Spleen (tissue), 13 donors: ENCODE measurements at regions of chr17 and their contacts with region 1.

Region 1: GRCh38 chr17:17108451-17109049 is 66.3 kb downstream of the MPRIP start:
- DNase-seq: no peak
- H3K4me3 ChIP-seq: no peak overlapping the region
- H3K27ac ChIP-seq: peak overlapping the region in 6 of 8 donors; percentile 20 to 72 (median 38)
- H3K4me1 ChIP-seq: peaks cover 36 to 100% (median 74%) of the 10 kb centered on the region in 6 donors
- H3K27me3 ChIP-seq: no peaks in the 10 kb centered on the region
- CTCF ChIP-seq: no peak
- POLR2A ChIP-seq: no peak

Region 2: DNA sequence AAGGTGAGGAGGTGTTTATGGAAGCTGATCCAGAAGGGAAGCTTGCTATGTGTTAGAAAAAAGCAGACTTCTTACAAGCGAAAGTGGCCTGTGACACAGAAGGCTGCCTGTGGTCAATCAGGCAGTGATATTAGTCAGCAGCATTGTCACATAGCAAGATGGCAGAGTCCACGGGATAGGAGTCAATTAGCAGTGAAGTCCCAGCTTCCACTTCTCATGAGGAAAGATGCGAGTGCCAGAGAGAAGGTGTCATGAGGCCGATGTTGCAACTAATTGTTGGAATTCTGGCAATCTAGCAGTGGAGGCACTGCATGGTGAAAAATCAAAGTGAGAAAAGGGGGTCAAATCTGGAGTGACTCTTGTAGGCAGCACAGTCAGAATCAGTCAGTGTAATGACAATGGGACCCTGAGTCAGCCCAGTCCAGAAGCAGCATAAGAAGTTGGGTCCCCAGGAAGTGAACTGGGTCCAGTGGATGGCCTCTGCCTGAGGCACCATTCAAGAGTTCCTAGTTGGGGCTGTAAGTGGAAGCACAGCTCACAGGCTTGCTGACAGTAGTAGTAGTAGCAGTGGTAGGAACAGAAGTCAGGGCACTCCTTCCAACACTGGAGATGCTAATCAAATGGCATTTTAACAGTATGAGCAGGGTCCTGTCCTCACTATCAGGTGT is 221.8 kb before region 1 on chr17:
- intact Hi-C with region 1: no loop called
- DNase-seq: peak; percentile 3
- H3K4me3 ChIP-seq: no peak overlapping the region
- H3K27ac ChIP-seq: no peak overlapping the region
- H3K4me1 ChIP-seq: no peaks in the 10 kb centered on the region
- H3K27me3 ChIP-seq: no peaks in the 10 kb centered on the region
- CTCF ChIP-seq: no peak
- POLR2A ChIP-seq: no peak

Region 3: DNA sequence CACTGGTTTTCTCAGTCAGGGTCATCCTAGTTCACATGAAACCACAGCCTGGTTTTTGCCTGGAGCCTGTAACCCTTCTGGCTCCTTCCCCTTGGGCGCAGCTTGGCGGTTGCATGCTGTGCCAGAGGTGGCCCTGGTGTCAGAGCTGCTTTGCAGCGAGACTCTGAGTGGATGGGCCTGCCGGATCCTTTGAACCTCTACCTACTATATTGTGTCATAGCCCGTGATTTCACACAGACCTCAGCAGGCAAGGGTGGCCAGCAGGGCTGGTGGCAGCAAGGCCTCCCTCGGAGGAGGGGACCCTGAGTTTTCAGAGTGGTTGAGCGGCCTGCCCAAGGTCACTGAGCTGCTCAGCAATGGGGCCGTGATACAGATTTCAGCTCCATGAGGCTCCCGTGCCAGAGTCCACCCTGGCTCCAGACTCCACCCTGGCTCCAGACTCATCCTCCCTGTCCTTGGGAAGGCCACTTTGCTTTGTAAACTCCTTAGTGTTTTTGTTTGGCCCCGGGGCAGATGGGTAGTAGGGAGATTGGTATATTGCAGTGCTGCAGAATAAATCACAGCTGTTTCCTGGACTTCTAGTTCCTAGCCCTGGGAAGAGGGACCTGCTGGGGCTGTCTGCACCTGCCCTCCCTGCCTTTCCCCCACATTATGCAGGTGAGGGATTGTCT is 56.6 kb before region 1 on chr17:
- intact Hi-C with region 1: loop called (anchors 10 kb)
- DNase-seq: peak; percentile 78
- H3K4me3 ChIP-seq: no peak overlapping the region
- H3K27ac ChIP-seq: peak overlapping the region; percentile 26 to 72 (median 65)
- H3K4me1 ChIP-seq: peaks cover 48 to 100% (median 88%) of the 10 kb centered on the region in 6 donors
- H3K27me3 ChIP-seq: no peaks in the 10 kb centered on the region
- CTCF ChIP-seq: no peak
- POLR2A ChIP-seq: no peak

Region 4: DNA sequence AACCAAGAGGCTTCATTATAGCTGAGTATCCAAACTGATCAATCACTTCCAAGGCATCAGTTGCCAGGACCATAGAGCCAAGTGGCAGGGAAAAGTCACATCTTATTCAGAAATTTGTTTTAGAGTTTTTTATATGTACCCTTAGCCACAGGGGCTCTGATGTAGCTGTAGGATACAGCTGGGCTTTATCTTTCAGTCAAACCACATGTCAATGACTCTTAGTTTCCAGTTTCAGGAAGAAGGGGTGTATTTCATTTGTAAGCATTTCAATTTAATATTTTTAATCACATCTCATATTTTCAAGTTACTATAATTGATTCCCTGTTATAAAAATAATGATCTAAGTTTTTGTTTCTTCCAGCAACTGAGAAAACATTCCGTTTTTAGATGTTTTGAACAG is 131.3 kb after region 1 on chr17:
- intact Hi-C with region 1: no loop called
- DNase-seq: no peak
- H3K4me3 ChIP-seq: no peak overlapping the region
- H3K27ac ChIP-seq: no peak overlapping the region
- H3K4me1 ChIP-seq: peaks cover 12 to 31% (median 23%) of the 10 kb centered on the region in 6 donors
- H3K27me3 ChIP-seq: no peaks in the 10 kb centered on the region
- CTCF ChIP-seq: no peak
- POLR2A ChIP-seq: no peak